Thyroid gland (tissue), 4 donors: ENCODE measurements at regions of chr22 and their contacts with region 1.

Region 1: GRCh38 chr22:31084811-31085497 is 3.8 kb downstream of the SMTN start:
- DNase-seq: peak; percentile 92
- H3K4me3 ChIP-seq: peak overlapping the region; percentile 54 to 86 (median 62)
- H3K27ac ChIP-seq: peak overlapping the region; percentile 89 to 96 (median 91)
- H3K4me1 ChIP-seq: peaks cover 24 to 43% of the 10 kb centered on the region in 2 donors
- H3K27me3 ChIP-seq: no peaks in the 10 kb centered on the region
- CTCF ChIP-seq: peak; percentile 52 to 87 (median 72)
- POLR2A ChIP-seq: peak in 1 of 2 donors; percentile 86

Region 2: DNA sequence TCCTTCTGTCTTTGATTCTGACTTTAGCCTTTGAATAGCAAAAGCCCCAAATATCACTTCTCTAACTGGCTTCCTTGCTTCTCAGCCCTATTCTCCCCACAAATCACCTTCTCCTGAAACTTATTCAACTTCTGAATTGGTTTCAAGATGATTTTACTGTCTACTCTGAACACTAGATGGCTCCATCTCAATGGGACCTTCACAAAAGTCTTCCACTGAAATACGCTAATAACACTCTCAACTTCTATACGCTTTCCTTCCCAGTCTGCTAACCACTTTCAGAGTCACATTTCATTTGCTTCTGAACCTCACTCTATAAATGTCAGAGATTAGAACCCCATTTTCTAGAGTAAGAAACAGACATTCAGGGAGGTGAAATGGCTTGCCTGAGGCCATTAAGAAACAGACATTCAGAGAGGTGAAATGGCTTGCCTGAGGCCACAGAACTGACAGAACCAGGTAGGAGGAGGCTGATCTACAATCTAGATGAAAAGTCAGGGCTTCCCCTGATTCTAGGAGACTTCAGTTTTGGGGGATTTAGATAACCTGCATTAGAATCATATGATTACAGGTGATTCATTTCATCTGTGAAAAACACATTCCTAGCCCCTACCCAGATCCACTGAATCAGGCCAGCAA is 137.0 kb before region 1 on chr22:
- intact Hi-C with region 1: loop called (anchors 5 kb)
- DNase-seq: no peak
- H3K4me3 ChIP-seq: no peak overlapping the region
- H3K27ac ChIP-seq: peak overlapping the region in 1 of 3 donors; percentile 38
- H3K4me1 ChIP-seq: peaks cover 17 to 31% of the 10 kb centered on the region in 2 donors
- H3K27me3 ChIP-seq: no peaks in the 10 kb centered on the region
- CTCF ChIP-seq: peak in 4 of 6 experiments; percentile 41 to 77 (median 60)
- POLR2A ChIP-seq: no peak

Region 3: DNA sequence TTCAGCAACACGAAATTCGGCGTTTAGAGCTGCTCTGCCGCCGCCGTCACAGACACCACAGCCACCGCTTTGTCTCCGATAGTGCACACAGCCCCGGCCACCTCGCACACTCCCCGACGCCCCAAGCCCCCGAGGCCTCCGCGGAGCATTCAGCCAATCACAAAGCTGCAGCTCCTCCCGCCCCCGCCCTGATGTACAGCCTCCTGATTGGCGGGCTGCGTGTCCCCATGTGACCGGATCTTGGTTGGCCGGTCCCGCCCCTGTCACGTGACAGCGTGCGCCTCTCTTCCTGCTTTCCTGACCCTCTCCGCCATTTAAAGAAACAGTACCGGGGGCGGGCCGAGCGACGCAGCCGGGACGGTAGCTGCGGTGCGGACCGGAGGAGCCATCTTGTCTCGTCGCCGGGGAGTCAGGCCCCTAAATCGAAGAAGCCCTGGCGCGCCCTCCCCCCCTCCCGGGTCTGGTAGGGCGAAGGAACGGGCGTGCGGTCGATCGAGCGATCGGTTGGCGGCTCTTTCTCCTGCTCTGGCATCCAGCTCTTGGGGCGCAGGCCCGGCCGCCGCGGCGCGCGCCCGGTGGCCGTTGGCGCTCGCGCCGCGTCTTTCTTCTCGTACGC is 115.9 kb before region 1 on chr22 and contains the start of gene TUG1:
- intact Hi-C with region 1: loop called (anchors 5 kb)
- DNase-seq: peak; percentile 99
- H3K4me3 ChIP-seq: peak within 1 kb of the TSS; percentile 38 to 92 (median 88)
- H3K27ac ChIP-seq: peak within 1 kb of the TSS; percentile 83 to 93 (median 92)
- H3K4me1 ChIP-seq: peaks cover 45 to 46% of the 10 kb centered on the region in 2 donors
- H3K27me3 ChIP-seq: no peaks in the 10 kb centered on the region
- CTCF ChIP-seq: no peak
- POLR2A ChIP-seq: peak; percentile 41 to 81
- total RNA-seq, gene TUG1: 81.6 to 127 (median 92.9) TPM